ENCODE measurements at regions of chr1 and their contacts with region 1.

Region 1: DNA sequence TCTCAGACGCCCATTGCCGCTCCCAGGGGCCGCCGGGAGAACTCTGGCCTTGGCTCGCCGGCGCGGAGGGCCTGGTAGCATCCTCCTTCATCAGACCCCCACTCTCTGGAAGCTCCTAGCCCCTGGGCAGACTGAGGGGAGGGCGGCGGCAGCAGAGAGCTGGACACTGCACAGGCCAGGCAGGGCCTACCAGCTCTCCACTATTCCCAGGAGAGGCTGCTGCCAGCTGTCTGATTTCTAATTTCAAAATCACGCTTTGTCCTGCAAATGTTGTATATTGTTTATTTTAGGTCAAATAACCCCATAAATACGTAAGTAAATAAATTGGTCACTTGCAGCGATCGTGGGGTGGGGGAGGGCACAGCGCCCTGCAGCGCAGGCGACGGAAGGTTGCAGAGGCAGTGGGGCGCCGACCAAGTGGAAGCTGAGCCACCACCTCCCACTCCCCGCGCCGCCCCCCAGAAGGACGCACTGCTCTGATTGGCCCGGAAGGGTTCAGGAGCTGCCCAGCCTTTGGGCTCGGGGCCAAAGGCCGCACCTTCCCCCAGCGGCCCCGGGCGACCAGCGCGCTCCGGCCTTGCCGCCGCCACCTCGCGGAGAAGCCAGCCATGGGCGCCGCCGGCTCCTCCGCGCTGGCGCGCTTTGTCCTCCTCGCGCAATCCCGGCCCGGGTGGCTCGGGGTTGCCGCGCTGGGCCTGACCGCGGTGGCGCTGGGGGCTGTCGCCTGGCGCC is at the start of gene MTARC1:
- DNase-seq: no peak
- H3K4me3 ChIP-seq: peak within 1 kb of the TSS; percentile 53
- CTCF ChIP-seq: peak; percentile 6

Region 2: GRCh38 chr1:220281159-220281574 is 505.3 kb before region 1 on chr1:
- CTCF ChIA-PET with region 1: interaction called, 14 read pairs
- POLR2A ChIA-PET with region 1: no interaction called
- DNase-seq: no peak
- H3K4me3 ChIP-seq: no peak overlapping the region
- CTCF ChIP-seq: peak; percentile 44

Region 3: DNA sequence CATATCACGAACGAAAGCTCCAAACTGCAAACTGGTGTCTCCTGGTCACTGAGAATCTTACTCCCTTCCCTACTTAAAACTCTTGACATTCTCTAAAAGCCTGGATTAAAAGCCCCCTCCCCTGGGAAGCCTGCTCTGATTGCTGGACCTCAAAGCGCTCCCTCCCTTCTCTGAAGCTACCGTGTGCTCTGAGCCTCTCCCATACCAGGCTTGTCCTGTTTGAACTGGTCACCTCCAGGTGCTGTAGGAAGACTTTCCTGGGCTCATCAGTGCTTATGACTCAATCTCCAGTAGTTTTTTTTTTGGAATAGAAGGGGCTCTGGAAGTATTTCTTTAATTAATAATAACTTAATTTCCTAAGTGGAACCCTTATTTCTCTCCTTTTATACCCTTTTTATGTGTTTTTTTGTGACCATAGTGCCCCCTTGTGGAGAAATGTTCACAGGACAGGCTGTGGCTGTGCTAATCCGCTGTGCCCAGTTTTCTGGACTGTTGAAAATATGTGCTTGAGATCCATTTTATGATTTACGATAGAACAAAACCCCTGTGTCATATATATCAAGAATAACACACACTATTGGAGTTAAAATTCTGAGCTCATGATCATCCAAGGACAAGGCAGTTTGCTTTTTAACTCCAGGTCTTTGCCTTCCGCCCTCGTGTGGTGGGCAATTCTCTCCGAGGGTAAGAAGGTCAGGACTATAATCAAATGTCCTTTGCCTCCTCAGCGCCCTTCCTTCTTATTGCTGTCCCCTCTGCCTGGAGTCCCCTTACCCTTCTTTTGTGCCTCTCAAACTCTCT is 17.1 kb after region 1 on chr1:
- CTCF ChIA-PET with region 1: interaction called, 18 read pairs
- POLR2A ChIA-PET with region 1: no interaction called
- DNase-seq: no peak
- H3K4me3 ChIP-seq: no peak overlapping the region
- CTCF ChIP-seq: peak; percentile 42

Measured in AG04449 (cell line).